ENCODE measurements at regions of chr3 and their contacts with region 1.

Region 1: DNA sequence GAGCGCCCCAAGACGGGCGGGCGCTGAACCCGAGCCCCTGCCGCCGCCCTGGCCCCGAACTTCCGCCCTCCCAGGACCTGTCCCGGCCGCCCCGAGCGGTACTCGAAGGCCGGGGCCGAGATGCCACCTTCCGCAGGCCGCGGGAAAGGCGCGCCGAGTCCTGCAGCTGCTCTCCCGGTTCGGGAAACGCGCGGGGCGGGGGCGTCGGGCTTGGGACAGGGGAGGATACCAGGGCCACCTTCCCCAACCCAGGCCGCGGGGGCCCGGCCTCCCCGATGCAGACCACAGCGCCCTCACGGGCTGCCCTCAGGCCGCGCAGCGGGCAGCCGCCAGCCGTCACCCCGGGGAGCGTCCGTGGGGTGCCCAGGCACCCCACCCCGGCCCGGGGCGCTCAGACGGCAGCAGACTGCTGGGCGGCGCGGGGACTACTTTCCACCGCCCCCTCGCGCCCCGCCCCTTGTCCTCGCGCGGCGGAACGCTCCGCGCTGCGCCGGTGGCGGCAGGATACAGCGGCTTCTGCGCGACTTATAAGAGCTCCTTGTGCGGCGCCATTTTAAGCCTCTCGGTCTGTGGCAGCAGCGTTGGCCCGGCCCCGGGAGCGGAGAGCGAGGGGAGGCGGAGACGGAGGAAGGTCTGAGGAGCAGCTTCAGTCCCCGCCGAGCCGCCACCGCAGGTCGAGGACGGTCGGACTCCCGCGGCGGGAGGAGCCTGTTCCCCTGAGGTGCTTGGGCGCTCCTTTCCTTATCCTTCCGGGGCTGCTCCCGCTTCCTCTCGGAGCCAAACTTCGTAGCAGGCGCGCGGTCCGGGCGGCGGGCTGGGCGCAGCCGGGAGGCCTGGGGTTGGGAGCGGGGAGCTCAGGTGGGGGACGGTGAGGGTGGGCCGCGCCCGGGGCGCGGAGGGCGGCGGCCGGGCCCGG is at the start of gene CTNNB1:
- DNase-seq: peak; percentile 69

Region 2: DNA sequence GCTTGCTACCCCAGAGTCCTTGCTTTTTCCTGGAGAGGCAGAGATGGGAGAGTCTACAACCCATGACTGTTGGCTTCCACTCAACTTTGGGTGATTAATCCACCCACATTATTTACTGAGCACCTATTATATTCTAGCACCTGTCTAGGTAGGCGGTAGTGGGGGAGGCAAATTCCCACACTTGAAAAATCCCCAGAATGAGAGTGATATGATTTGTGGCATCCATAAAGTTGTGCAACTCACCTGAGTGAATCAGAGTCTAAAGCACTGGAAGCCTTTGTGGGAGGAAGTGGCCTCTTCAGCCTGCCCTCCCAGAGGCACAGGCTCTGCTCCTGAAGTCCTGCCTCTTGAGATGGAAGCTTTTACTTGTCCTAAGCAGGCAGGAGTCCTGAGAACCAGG is 40.3 kb before region 1 on chr3:
- CTCF ChIA-PET with region 1: no interaction called
- POLR2A ChIA-PET with region 1: interaction called, 13 read pairs
- DNase-seq: no peak

Region 3: GRCh38 chr3:41175365-41175764 is 23.8 kb before region 1 on chr3:
- CTCF ChIA-PET with region 1: no interaction called
- POLR2A ChIA-PET with region 1: interaction called, 11 read pairs
- DNase-seq: no peak

Region 4: DNA sequence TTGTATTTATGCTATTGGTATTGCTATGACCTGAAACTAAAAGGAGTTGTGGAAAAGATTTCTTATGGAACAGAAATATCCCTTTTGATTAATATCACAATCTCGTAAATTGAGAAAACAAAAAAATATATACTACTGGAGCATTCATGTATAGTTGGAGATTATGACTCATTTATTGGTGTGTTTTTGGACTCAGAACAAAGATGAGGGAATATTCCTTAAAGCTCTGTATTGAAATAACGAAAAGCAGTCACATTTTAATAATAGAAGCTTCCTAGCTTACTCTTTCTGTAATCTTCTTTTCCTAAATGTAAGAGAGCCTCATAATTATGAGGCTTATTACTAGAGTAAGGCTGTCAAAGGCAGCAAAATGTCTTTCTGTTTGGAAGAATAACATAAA is 14.4 kb after region 1 on chr3:
- CTCF ChIA-PET with region 1: no interaction called
- POLR2A ChIA-PET with region 1: interaction called, 28 read pairs
- DNase-seq: no peak